ENCODE measurements at regions of chr5 and their contacts with region 1.

Region 1: GRCh38 chr5:16568875-16569580 is 47.8 kb downstream of the RETREG1 start:
- DNase-seq: peak; percentile 53 to 98 (median 94)
- H3K4me3 ChIP-seq: peak overlapping the region in 7 of 59 donors; percentile 2 to 25 (median 8)
- H3K27ac ChIP-seq: peak overlapping the region; percentile 74 to 99 (median 96)
- H3K27me3 ChIP-seq: no peaks in the 10 kb centered on the region
- CTCF ChIP-seq: peak in 25 of 56 donors; percentile 3 to 48 (median 25)

Region 2: GRCh38 chr5:16616536-16617273 is 47.7 kb after region 1 on chr5 and contains the start of gene RETREG1:
- intact Hi-C with region 1: loop called in 1 of 2 experiments (anchors 5 kb)
- DNase-seq: peak; percentile 57 to 89 (median 74)
- H3K4me3 ChIP-seq: peak within 1 kb of the TSS; percentile 67 to 98 (median 88)
- H3K27ac ChIP-seq: peak within 1 kb of the TSS in 58 of 59 donors; percentile 69 to 97 (median 91)
- H3K27me3 ChIP-seq: no peaks in the 10 kb centered on the region
- CTCF ChIP-seq: no peak
- total RNA-seq, gene RETREG1: 26.4 to 149 (median 81.6) TPM

Region 3: DNA sequence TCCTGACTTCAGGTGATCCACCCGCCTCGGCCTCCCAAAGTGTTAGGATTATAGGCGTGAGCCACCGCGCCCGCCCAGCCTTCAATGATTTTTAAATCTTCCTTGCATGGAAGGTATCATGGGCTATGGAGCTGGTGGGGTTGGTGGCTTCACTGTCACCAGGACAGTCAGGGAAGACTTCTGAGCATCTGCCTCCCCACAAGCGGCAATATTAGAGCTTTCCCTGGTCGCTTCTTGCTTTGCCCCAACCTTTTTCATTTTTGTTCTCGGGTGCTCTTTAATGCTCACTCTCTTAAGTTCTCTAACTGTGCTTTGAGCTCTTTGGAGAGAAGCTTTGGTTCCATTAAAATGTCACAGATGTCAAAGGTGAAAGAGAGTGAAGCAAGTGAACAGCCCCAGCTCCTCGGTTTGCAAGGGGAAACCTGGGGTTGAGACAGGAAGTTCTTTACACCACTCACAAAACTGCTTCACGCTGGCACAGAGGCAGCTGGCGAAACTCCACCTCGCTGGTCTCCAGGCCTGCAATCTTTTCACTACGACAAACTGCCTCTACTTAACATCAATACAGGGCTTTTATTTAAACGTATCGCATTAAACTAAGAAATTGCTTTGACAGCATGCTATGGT is 190.2 kb after region 1 on chr5:
- intact Hi-C with region 1: no loop called
- DNase-seq: no peak
- H3K4me3 ChIP-seq: no peak overlapping the region
- H3K27ac ChIP-seq: no peak overlapping the region
- H3K27me3 ChIP-seq: no peaks in the 10 kb centered on the region
- CTCF ChIP-seq: no peak